GM12878 (cell line): ENCODE measurements at regions of chr15 and their contacts with region 1.

Region 1: DNA sequence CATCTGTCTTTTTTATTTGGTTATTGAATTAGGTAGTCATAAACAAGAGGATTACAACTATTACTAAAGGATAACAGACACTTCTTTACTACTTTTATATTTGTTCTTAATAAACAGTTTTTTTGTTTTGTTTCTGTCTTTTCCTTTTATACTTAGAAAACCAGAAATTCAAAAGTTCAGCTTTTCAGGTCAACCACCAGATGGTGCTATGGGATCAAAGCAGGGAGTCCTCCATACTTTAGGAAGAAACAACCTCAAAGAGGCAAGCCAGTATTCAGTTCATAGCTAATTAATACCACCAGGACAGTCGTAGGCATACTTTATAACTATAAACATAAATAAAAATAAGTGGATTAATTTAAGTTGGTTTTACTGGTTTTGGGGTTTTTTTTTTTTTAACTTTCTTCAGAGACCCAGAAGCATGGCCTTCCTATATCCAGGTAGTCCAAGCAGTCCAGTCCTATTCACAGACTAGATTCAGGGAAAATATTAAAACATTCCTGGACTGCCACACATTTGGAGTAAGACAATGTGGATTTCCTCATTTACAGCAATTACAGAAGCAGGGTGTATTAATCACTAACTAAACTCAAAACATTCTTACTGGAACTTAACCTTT is 16.0 kb upstream of the EID1 start:
- DNase-seq: no peak
- ATAC-seq: peak; percentile 87
- H3K4me3 ChIP-seq: no peak overlapping the region
- H3K27ac ChIP-seq: no peak overlapping the region
- H3K4me1 ChIP-seq: no peaks in the 10 kb centered on the region
- H3K27me3 ChIP-seq: no peaks in the 10 kb centered on the region; a peak in 1 of 4 replicates
- CTCF ChIP-seq: peak; percentile 67 to 92 (median 68); a peak in 5 of 6 replicates
- EP300 ChIP-seq: no peak
- POLR2A ChIP-seq: no peak
- RAD21 ChIP-seq: peak; percentile 99

Region 2: DNA sequence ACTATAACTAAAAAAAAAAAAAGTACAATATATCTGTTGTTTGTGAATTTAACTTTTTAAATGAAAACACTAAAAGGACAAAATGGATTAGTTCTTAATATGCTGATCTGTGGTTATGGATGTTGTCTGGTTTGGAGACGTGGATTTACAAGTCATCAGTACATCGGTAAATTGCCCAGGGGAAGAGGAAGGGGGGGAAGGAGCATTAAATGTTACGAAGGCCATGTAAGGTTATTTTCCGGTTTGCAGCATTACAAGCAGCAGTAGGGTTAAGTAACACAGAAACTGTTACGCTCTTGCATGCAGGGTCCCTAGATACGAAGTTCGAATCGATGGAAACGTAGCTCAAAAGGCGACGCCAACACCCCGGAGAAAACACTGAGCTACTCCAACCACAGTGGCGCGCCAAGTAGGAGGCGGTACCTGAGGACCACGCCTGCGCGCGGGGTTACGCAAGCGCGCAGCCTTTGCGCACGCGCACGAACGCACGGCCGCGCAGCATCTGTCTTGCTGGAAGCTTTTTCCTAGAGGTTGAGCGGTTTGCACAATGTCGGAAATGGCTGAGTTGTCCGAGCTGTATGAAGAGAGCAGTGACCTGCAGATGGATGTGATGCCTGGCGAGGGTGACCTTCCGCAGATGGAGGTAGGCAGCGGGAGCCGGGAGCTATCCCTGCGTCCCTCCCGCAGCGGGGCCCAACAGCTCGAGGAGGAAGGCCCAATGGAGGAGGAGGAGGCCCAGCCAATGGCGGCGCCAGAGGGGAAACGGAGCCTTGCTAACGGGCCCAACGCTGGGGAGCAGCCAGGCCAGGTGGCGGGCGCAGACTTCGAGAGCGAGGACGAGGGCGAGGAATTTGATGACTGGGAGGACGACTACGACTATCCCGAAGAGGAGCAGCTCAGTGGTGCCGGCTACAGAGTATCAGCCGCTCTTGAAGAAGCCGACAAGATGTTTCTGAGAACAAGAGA is 16.0 kb after region 1 on chr15 and contains the start of gene EID1:
- CTCF ChIA-PET with region 1: interaction called, 26 read pairs
- POLR2A ChIA-PET with region 1: interaction called, 6 read pairs
- RAD21 ChIA-PET with region 1: interaction called, 20 read pairs
- SMC1A ChIA-PET with region 1: interaction called, 9 read pairs
- in situ Hi-C with region 1: no loop called
- intact Hi-C with region 1: no loop called
- DNase-seq: peak; percentile 87
- ATAC-seq: peak; percentile 94
- H3K4me3 ChIP-seq: peak within 1 kb of the TSS; percentile 67
- H3K27ac ChIP-seq: peak within 1 kb of the TSS; percentile 85
- H3K4me1 ChIP-seq: peaks cover 4% of the 10 kb centered on the region
- H3K27me3 ChIP-seq: no peaks in the 10 kb centered on the region
- CTCF ChIP-seq: no peak
- EP300 ChIP-seq: peak in 1 of 2 experiments; percentile 40; a peak in 1 of 4 replicates
- POLR2A ChIP-seq: peak; percentile 98
- RAD21 ChIP-seq: no peak
- polyA plus RNA-seq, gene EID1: 45.6 to 79.5 TPM

Region 3: DNA sequence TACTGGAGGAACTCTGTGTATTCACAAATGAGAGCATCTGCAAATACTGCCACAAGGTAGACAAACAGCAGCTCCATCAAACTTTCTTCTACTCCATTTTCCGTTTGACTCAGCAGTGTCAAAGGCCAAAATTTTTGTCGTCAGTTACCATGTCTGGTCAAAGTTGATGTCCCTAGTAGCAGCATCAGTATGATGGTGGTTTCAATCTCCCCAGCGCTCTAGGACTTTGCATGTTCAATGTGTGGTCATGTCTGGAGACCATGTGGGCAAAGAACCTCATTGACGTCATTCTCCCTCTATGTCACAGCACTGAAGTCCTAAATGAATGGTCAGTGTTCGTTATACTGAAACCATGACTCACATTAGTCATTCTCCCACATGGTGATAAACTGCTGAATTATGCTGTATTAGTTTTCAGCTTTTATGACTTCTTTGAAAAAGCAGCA is 78.5 kb after region 1 on chr15:
- CTCF ChIA-PET with region 1: interaction called, 10 read pairs
- POLR2A ChIA-PET with region 1: no interaction called
- RAD21 ChIA-PET with region 1: interaction called, 4 read pairs
- SMC1A ChIA-PET with region 1: interaction called, 7 read pairs
- in situ Hi-C with region 1: no loop called
- intact Hi-C with region 1: no loop called
- DNase-seq: peak; percentile 81
- ATAC-seq: peak; percentile 95
- H3K4me3 ChIP-seq: no peak overlapping the region
- H3K27ac ChIP-seq: no peak overlapping the region
- H3K4me1 ChIP-seq: peaks cover 3% of the 10 kb centered on the region; the same call in 1 of the 2 replicates
- H3K27me3 ChIP-seq: no peaks in the 10 kb centered on the region
- CTCF ChIP-seq: no peak
- EP300 ChIP-seq: peak; percentile 95 to 98
- POLR2A ChIP-seq: no peak
- RAD21 ChIP-seq: no peak

Region 4: GRCh38 chr15:48975472-48976419 is 113.8 kb after region 1 on chr15:
- CTCF ChIA-PET with region 1: interaction called, 134 read pairs
- POLR2A ChIA-PET with region 1: interaction called, 3 read pairs
- RAD21 ChIA-PET with region 1: interaction called, 36 read pairs
- SMC1A ChIA-PET with region 1: interaction called, 18 read pairs
- in situ Hi-C with region 1: no loop called
- intact Hi-C with region 1: loop called (anchors 2 kb)
- DNase-seq: no peak
- ATAC-seq: peak; percentile 99
- H3K4me3 ChIP-seq: peak overlapping the region; percentile 52; the same call in 1 of the 2 replicates
- H3K27ac ChIP-seq: no peak overlapping the region
- H3K4me1 ChIP-seq: no peaks in the 10 kb centered on the region
- H3K27me3 ChIP-seq: no peaks in the 10 kb centered on the region
- CTCF ChIP-seq: peak; percentile 74 to 93 (median 76)
- EP300 ChIP-seq: no peak
- POLR2A ChIP-seq: peak; percentile 23; the same call in 1 of the 2 replicates
- RAD21 ChIP-seq: peak; percentile 54

Region 5: GRCh38 chr15:49145651-49146609 is 284.0 kb after region 1 on chr15:
- CTCF ChIA-PET with region 1: interaction called, 95 read pairs
- POLR2A ChIA-PET with region 1: no interaction called
- RAD21 ChIA-PET with region 1: interaction called, 25 read pairs
- SMC1A ChIA-PET with region 1: interaction called, 47 read pairs
- in situ Hi-C with region 1: loop called (anchors 5 kb)
- intact Hi-C with region 1: loop called (anchors 2 kb)
- DNase-seq: no peak
- ATAC-seq: peak; percentile 75
- H3K4me3 ChIP-seq: no peak overlapping the region
- H3K27ac ChIP-seq: no peak overlapping the region
- H3K4me1 ChIP-seq: no peaks in the 10 kb centered on the region
- H3K27me3 ChIP-seq: no peaks in the 10 kb centered on the region
- CTCF ChIP-seq: peak; percentile 59 to 64 (median 63); a peak in 5 of 6 replicates
- EP300 ChIP-seq: no peak
- POLR2A ChIP-seq: no peak
- RAD21 ChIP-seq: peak; percentile 57

Region 6: DNA sequence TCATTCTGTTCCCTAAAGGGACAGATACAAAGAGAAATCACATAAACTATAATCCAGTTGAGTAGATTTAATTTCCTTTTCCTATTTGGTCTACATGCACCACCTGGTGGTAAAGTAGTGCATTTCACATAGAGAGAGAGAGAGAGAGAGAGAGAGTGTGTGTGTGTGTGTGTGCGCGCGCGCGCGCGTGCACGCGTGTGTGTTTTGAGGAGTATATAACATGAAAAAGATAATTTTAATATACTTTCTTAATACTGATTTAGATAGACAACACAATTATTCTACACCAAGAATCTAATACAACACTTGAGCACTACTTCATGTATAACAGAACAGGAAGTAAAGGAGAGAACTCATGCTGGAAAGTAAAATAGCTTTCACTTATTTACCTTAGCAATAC is 560.1 kb after region 1 on chr15:
- CTCF ChIA-PET with region 1: interaction called, 47 read pairs
- POLR2A ChIA-PET with region 1: no interaction called
- RAD21 ChIA-PET with region 1: interaction called, 29 read pairs
- SMC1A ChIA-PET with region 1: interaction called, 49 read pairs
- in situ Hi-C with region 1: loop called (anchors 5 kb)
- intact Hi-C with region 1: loop called (anchors 1 kb)
- DNase-seq: peak; percentile 12
- ATAC-seq: peak; percentile 72
- H3K4me3 ChIP-seq: no peak overlapping the region
- H3K27ac ChIP-seq: no peak overlapping the region
- H3K4me1 ChIP-seq: no peaks in the 10 kb centered on the region
- H3K27me3 ChIP-seq: no peaks in the 10 kb centered on the region
- CTCF ChIP-seq: peak; percentile 57 to 78 (median 66)
- EP300 ChIP-seq: no peak
- POLR2A ChIP-seq: no peak
- RAD21 ChIP-seq: peak; percentile 80